Activated naive CD4-positive, alpha-beta T cell treated with anti-CD3 and anti-CD28 coated beads, Interleukin-2, amount 10 ng/mL, durations not matched to agents 7 days and 5 days (primary cell): ENCODE measurements at regions of chr11 and their contacts with region 1.

Region 1: GRCh38 chr11:61792310-61793085 is at the starts of genes FEN1 and TMEM258:
- DNase-seq: peak; percentile 93
- H3K4me3 Mint-ChIP-seq: peak within 1 kb of the TSS; percentile 77
- H3K27ac Mint-ChIP-seq: peak within 1 kb of the TSS; percentile 97
- H3K4me1 Mint-ChIP-seq: peaks cover 65% of the 10 kb centered on the region
- H3K27me3 Mint-ChIP-seq: no peaks in the 10 kb centered on the region

Region 2: DNA sequence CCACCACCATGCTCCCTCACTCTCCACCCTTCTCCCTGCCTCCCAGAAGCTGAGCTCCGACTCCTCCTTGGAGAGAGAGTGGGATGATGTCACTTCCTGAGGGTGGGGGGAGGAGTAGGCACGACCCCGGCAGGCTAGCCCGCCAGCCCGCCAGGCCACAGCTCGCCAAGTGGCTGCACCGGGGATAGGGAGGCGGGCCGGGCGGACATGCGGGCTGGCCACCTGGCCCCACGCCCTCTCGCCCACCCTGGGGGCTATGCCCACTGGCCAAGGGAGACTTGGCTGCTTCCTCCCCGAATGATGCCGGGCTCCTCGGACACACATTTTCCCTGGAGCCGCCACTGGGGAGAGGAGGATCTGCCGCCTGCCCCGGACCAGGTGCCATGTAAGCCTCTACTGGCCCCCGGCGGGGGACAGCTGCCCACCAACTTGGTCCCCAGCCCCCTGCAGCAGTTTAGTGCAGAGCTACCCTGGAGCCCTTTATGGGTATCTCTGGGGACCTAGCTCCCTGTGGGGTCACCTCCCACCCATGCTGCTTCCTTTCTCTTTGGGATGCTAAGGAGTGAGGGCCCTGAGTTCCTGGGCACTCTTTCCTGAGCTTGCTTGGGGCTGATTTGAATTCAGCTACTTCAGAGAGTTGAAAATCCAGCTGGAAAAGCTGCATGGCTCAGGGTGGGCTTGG is 73.7 kb before region 1 on chr11:
- CTCF ChIA-PET with region 1: no interaction called
- DNase-seq: no peak
- H3K4me3 Mint-ChIP-seq: no peak overlapping the region
- H3K27ac Mint-ChIP-seq: no peak overlapping the region
- H3K4me1 Mint-ChIP-seq: no peaks in the 10 kb centered on the region
- H3K27me3 Mint-ChIP-seq: peaks cover 24% of the 10 kb centered on the region

Region 3: GRCh38 chr11:61747192-61747966 is 45.1 kb before region 1 on chr11:
- CTCF ChIA-PET with region 1: interaction called, 27 read pairs
- DNase-seq: peak; percentile 68
- H3K4me3 Mint-ChIP-seq: no peak overlapping the region
- H3K27ac Mint-ChIP-seq: no peak overlapping the region
- H3K4me1 Mint-ChIP-seq: peaks cover 2% of the 10 kb centered on the region
- H3K27me3 Mint-ChIP-seq: peaks cover 42% of the 10 kb centered on the region

Region 4: DNA sequence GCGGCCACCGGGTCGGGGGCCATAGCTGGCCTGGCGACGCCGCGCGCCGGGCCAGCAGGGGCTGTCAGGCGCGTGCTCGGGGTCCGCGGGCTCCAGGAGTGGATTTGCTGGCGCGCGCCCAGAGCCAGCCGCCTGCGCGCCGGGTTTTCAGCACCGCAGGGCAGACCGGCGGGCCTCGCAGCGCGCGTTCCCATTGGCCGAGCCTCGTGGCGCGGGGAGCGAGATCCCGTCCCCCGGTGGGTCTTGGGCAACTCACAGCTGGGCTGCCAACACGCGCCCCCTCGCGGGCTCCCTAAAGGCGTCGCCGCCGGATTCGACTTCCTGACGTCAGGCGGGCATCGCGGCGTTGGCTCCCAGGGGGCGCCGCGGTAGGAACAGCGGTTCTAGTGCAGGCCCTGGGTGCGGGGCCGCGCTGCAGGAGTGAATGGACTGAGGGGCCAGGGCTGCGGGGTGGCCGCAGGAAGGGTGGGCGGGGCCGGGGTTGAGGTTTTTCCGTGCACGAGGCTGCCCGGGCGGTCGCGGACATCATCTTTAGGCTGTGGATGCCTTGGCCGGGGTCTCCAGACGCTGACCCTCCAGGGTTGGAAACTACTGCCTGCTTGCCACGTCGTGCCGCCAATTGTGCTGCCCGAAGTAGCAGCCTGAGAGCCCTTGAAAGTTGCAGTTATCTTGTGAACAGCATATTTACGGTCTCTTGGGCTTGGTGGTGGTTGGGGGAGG is 24.4 kb after region 1 on chr11 and contains the start of gene FADS1:
- CTCF ChIA-PET with region 1: interaction called, 72 read pairs
- DNase-seq: peak; percentile 93
- H3K4me3 Mint-ChIP-seq: peak within 1 kb of the TSS; percentile 95
- H3K27ac Mint-ChIP-seq: peak within 1 kb of the TSS; percentile 93
- H3K4me1 Mint-ChIP-seq: peaks cover 21% of the 10 kb centered on the region
- H3K27me3 Mint-ChIP-seq: peaks cover 56% of the 10 kb centered on the region

Region 5: GRCh38 chr11:61871158-61871597 is 78.7 kb after region 1 on chr11:
- CTCF ChIA-PET with region 1: interaction called, 12 read pairs
- DNase-seq: peak; percentile 78
- H3K4me3 Mint-ChIP-seq: peak overlapping the region; percentile 55
- H3K27ac Mint-ChIP-seq: no peak overlapping the region
- H3K4me1 Mint-ChIP-seq: peaks cover 3% of the 10 kb centered on the region
- H3K27me3 Mint-ChIP-seq: peaks cover 39% of the 10 kb centered on the region

Region 6: GRCh38 chr11:61947486-61948210 is 155.2 kb after region 1 on chr11:
- CTCF ChIA-PET with region 1: interaction called, 42 read pairs
- DNase-seq: peak; percentile 82
- H3K4me3 Mint-ChIP-seq: no peak overlapping the region
- H3K27ac Mint-ChIP-seq: no peak overlapping the region
- H3K4me1 Mint-ChIP-seq: no peaks in the 10 kb centered on the region
- H3K27me3 Mint-ChIP-seq: peaks cover 26% of the 10 kb centered on the region